CD4-positive, alpha-beta T cell (primary cell): ENCODE measurements at regions of chr6 and their contacts with region 1.

Region 1: DNA sequence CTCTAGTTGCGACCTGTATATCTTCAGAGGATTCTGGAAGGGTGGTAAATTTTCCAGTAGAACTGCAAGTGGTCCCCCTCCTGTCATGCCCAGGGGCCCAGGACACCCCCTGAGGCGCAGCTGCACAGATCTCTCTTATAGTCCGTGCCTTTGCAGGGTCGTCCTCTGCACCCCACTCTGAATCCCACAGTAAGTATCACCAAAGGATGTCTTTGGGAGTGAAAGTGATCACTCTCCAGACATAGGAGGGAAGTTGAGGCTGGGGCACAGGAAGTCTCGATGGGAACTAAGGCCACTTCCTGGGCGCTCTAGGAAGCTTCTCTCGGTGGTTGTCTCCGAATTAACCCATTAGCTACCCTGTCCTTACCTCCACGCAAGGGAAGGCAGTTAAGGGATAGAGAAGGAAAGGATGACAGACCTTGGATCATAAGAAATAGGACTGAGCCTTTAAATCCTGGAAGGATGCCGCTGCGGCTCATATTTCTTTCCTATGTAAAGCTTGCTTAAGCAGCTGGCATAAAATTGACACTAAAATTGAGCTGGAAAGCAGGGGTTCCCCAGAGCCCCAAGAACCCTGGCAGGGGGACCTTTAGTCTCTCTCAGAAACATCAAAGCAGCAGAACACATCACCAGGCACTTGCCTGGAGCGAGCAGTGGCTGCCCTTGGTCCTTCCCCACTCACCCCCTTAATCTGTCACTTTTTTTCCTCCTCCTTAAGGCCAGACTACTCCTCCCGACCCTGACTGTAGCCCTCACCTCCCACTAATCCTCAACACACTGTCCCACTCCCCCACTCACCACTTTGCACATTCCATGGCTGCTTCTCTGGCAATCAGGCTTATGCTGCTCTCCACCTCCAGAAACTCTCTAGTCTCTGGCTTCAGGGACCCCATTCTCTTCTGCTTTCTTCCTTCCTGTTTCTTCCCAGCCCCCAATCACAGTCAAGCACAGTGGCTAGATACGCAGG is at the start of gene ZKSCAN4:
- DNase-seq: peak; percentile 65 to 91 (median 80)
- ATAC-seq: peak; percentile 91
- H3K4me3 ChIP-seq: peak within 1 kb of the TSS; percentile 84
- H3K4me3 Mint-ChIP-seq: peak within 1 kb of the TSS; percentile 99
- H3K27ac ChIP-seq: peak within 1 kb of the TSS in 1 of 2 donors; percentile 61
- H3K27ac Mint-ChIP-seq: peak within 1 kb of the TSS; percentile 93
- H3K4me1 ChIP-seq: peaks cover 24% of the 10 kb centered on the region
- H3K4me1 Mint-ChIP-seq: peaks cover 43% of the 10 kb centered on the region
- H3K27me3 ChIP-seq: no peaks in the 10 kb centered on the region
- H3K27me3 Mint-ChIP-seq: peaks cover 4% of the 10 kb centered on the region
- CTCF ChIP-seq: no peak
- total RNA-seq, gene ZKSCAN4: 0.84 to 1.6 TPM

Region 2: DNA sequence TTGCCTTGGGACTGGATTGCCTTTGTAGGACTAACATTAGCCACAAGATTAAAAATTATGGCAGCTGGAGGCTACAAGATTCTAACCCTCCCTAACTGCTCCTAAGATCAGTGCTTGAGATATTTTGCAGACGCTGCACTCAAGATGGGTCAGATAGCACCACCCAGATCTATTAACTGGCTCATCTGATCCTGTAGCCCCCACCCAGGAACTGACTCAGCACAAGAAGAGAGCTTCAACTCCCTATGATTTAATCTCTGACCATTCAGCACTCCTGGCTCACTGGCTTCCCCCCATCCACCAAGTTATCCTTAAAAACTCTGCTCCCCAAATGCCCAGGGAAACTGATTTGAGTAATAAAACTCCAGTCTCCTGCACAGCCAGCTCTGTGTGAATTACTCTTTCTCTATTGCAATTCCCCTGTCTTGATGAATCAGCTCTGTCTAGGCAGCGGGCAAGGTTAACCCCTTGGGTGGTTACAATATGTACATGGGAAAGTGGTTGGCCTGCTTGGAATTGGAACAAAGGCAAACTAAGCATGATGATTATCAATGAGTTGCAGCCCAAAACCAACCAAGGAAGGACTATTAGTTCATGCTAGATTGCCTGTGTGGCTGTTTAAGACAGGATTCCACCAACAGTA is 451.4 kb before region 1 on chr6:
- CTCF ChIA-PET with region 1: no interaction called
- POLR2A ChIA-PET with region 1: no interaction called
- intact Hi-C with region 1: no loop called
- DNase-seq: no peak
- ATAC-seq: no peak
- H3K4me3 ChIP-seq: no peak overlapping the region
- H3K4me3 Mint-ChIP-seq: no peak overlapping the region
- H3K27ac ChIP-seq: no peak overlapping the region
- H3K27ac Mint-ChIP-seq: no peak overlapping the region
- H3K4me1 ChIP-seq: no peaks in the 10 kb centered on the region
- H3K4me1 Mint-ChIP-seq: peaks cover 3% of the 10 kb centered on the region
- H3K27me3 ChIP-seq: no peaks in the 10 kb centered on the region
- H3K27me3 Mint-ChIP-seq: peaks cover 6% of the 10 kb centered on the region
- CTCF ChIP-seq: no peak

Region 3: GRCh38 chr6:28080631-28081485 is 171.4 kb before region 1 on chr6:
- CTCF ChIA-PET with region 1: no interaction called
- POLR2A ChIA-PET with region 1: interaction called, 3 read pairs
- intact Hi-C with region 1: loop called in 1 of 2 experiments (anchors 2 kb)
- DNase-seq: peak; percentile 81 to 96 (median 90)
- ATAC-seq: peak; percentile 76
- H3K4me3 ChIP-seq: peak overlapping the region; percentile 71
- H3K4me3 Mint-ChIP-seq: peak overlapping the region; percentile 86
- H3K27ac ChIP-seq: peak overlapping the region; percentile 82 to 90
- H3K27ac Mint-ChIP-seq: peak overlapping the region; percentile 88
- H3K4me1 ChIP-seq: peaks cover 16% of the 10 kb centered on the region
- H3K4me1 Mint-ChIP-seq: peaks cover 22% of the 10 kb centered on the region
- H3K27me3 ChIP-seq: no peaks in the 10 kb centered on the region
- H3K27me3 Mint-ChIP-seq: no peaks in the 10 kb centered on the region
- CTCF ChIP-seq: no peak

Region 4: GRCh38 chr6:28235912-28236452 is 16.3 kb before region 1 on chr6:
- CTCF ChIA-PET with region 1: no interaction called
- POLR2A ChIA-PET with region 1: no interaction called
- intact Hi-C with region 1: no loop called
- DNase-seq: no peak
- ATAC-seq: no peak
- H3K4me3 ChIP-seq: no peak overlapping the region
- H3K4me3 Mint-ChIP-seq: no peak overlapping the region
- H3K27ac ChIP-seq: no peak overlapping the region
- H3K27ac Mint-ChIP-seq: no peak overlapping the region
- H3K4me1 ChIP-seq: no peaks in the 10 kb centered on the region
- H3K4me1 Mint-ChIP-seq: no peaks in the 10 kb centered on the region
- H3K27me3 ChIP-seq: no peaks in the 10 kb centered on the region
- H3K27me3 Mint-ChIP-seq: peaks cover 18% of the 10 kb centered on the region
- CTCF ChIP-seq: no peak

Region 5: DNA sequence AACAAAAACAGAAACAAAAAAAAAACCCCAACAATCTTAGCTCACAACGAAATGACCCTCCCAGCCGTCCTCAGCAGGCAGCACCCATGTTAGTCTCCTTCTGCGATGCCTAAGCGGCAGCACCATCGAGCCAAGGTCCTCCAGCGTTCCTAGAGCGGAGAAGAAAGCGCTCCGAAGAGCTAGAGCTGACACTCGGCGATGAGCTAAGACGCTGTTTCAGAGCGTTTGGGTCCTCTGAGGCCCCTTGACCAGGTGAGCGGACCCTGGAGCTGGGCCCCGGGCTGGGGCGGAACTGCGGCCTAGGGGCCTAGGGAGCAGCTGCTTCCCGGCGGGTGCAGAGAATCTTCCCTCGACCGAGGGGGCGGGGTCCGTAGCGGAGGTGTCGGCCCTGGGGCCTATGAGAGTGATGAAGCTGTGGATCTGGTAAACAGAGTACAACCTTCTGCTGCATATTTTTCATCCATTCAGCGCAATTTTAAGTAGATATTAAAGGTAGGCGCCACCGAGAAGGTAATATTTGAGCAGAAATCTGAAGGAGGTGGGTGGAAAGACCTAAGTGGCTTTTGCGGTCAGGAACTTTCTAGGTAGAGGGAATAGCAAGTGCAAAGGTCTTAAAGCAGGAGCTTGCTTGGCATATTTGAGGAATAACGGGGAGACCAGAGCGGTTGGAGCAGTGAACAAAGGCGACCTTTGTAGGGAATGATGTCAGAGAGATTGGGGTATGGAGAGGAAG is 14.8 kb after region 1 on chr6 and contains the start of gene ZSCAN26:
- CTCF ChIA-PET with region 1: interaction called, 7 read pairs
- POLR2A ChIA-PET with region 1: interaction called, 71 read pairs
- intact Hi-C with region 1: loop called (anchors 1 kb)
- DNase-seq: peak; percentile 78 to 93 (median 85)
- ATAC-seq: peak; percentile 95
- H3K4me3 ChIP-seq: peak within 1 kb of the TSS; percentile 70
- H3K4me3 Mint-ChIP-seq: no peak within 1 kb of the TSS
- H3K27ac ChIP-seq: peak within 1 kb of the TSS; percentile 51 to 80
- H3K27ac Mint-ChIP-seq: no peak within 1 kb of the TSS
- H3K4me1 ChIP-seq: peaks cover 8% of the 10 kb centered on the region
- H3K4me1 Mint-ChIP-seq: peaks cover 19% of the 10 kb centered on the region
- H3K27me3 ChIP-seq: no peaks in the 10 kb centered on the region
- H3K27me3 Mint-ChIP-seq: peaks cover 2% of the 10 kb centered on the region
- CTCF ChIP-seq: no peak
- total RNA-seq, gene ZSCAN26: 6.2 to 8.0 TPM

Region 6: GRCh38 chr6:28355743-28356665 is 103.7 kb after region 1 on chr6:
- CTCF ChIA-PET with region 1: interaction called, 5 read pairs
- POLR2A ChIA-PET with region 1: no interaction called
- intact Hi-C with region 1: loop called (anchors 1 to 5 kb)
- DNase-seq: peak; percentile 26 to 84 (median 42)
- ATAC-seq: peak; percentile 93
- H3K4me3 ChIP-seq: peak overlapping the region; percentile 64
- H3K4me3 Mint-ChIP-seq: peak overlapping the region; percentile 90
- H3K27ac ChIP-seq: no peak overlapping the region
- H3K27ac Mint-ChIP-seq: peak overlapping the region; percentile 22
- H3K4me1 ChIP-seq: peaks cover 21% of the 10 kb centered on the region
- H3K4me1 Mint-ChIP-seq: peaks cover 42% of the 10 kb centered on the region
- H3K27me3 ChIP-seq: no peaks in the 10 kb centered on the region
- H3K27me3 Mint-ChIP-seq: no peaks in the 10 kb centered on the region
- CTCF ChIP-seq: peak; percentile 77

Region 7: GRCh38 chr6:28443112-28443773 is 191.0 kb after region 1 on chr6 and contains the start of gene ZSCAN23:
- CTCF ChIA-PET with region 1: no interaction called
- POLR2A ChIA-PET with region 1: no interaction called
- intact Hi-C with region 1: loop called in 1 of 2 experiments (anchors 5 kb)
- DNase-seq: peak; percentile 68 to 94 (median 80)
- ATAC-seq: peak; percentile 91
- H3K4me3 ChIP-seq: peak within 1 kb of the TSS; percentile 53
- H3K4me3 Mint-ChIP-seq: peak within 1 kb of the TSS; percentile 96
- H3K27ac ChIP-seq: no peak within 1 kb of the TSS
- H3K27ac Mint-ChIP-seq: peak within 1 kb of the TSS; percentile 77
- H3K4me1 ChIP-seq: peaks cover 19% of the 10 kb centered on the region
- H3K4me1 Mint-ChIP-seq: peaks cover 34% of the 10 kb centered on the region
- H3K27me3 ChIP-seq: peaks cover 19 to 28% of the 10 kb centered on the region in 2 experiments
- H3K27me3 Mint-ChIP-seq: peaks cover 37% of the 10 kb centered on the region
- CTCF ChIP-seq: no peak
- total RNA-seq, gene ZSCAN23: 0.19 to 0.78 TPM